Gastrocnemius medialis (tissue), 4 donors: ENCODE measurements at regions of chr2 and their contacts with region 1.

Region 1: GRCh38 chr2:239401067-239401880 is 454 bp upstream of the HDAC4 start:
- DNase-seq: peak; percentile 98 to 99
- ATAC-seq: peak; percentile 78 to 80
- H3K4me3 ChIP-seq: peak overlapping the region; percentile 61 to 96 (median 78)
- H3K27ac ChIP-seq: peak overlapping the region; percentile 93 to 100 (median 97)
- H3K4me1 ChIP-seq: peaks cover 13 to 39% of the 10 kb centered on the region in 2 donors
- H3K27me3 ChIP-seq: no peaks in the 10 kb centered on the region
- CTCF ChIP-seq: peak in 1 of 5 experiments; percentile 36
- POLR2A ChIP-seq: peak; percentile 98 to 99

Region 2: GRCh38 chr2:239223310-239224198 is 177.7 kb before region 1 on chr2:
- in situ Hi-C with region 1: no loop called
- intact Hi-C with region 1: loop called (anchors 1 kb)
- DNase-seq: no peak
- ATAC-seq: peak; percentile 10 to 15
- H3K4me3 ChIP-seq: no peak overlapping the region
- H3K27ac ChIP-seq: peak overlapping the region; percentile 86 to 99 (median 93)
- H3K4me1 ChIP-seq: peaks cover 89 to 90% of the 10 kb centered on the region in 2 donors
- H3K27me3 ChIP-seq: no peaks in the 10 kb centered on the region
- CTCF ChIP-seq: no peak
- POLR2A ChIP-seq: no peak

Region 3: GRCh38 chr2:239275044-239275685 is 126.1 kb before region 1 on chr2:
- in situ Hi-C with region 1: no loop called
- intact Hi-C with region 1: loop called (anchors 1 kb)
- DNase-seq: peak; percentile 92 to 96
- ATAC-seq: peak; percentile 68 to 75
- H3K4me3 ChIP-seq: peak overlapping the region; percentile 22 to 46 (median 40)
- H3K27ac ChIP-seq: peak overlapping the region; percentile 94 to 99 (median 98)
- H3K4me1 ChIP-seq: peaks cover 97 to 98% of the 10 kb centered on the region in 2 donors
- H3K27me3 ChIP-seq: no peaks in the 10 kb centered on the region
- CTCF ChIP-seq: peak in 3 of 5 experiments; percentile 8 to 58 (median 25)
- POLR2A ChIP-seq: peak; percentile 58 to 76

Region 4: DNA sequence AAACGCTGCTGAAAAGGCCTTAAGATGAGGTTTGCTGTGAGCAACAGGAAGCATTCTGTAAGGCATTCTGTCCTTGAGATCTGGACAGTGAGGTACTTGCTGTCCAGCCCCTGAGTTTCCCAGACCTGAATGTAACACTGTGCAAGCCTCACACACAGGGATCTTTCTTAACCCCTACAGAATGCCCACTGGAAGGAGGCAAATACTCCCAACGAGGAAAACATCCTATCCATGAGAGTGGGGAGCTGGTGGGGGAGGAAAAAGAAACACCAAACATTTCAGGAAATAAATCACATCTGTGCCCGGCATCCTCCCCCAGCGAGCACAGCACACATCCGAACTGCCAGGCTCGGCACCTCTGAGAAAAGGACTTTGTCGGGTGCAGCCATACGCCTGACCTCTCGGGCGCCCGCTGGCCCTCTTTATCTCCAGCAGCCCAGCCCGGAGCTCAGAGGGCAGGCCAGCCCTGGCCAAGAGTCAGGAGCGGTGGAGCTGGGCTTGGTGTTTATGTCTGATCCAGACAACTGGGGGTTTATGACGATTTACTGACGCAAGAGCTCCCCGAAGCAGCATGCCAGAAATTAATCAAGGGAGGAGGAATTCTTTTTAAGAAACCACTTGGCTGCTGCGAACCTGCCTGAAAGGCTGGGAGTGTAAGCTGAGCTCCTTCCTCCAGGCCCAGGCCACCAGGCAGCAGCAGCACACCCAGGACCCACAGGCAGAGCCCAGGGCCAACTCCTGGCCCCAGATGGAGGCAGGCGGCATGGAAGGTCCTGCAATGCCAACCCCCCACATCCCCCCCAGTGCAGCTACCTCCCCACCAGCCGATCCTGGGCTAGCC is 72.7 kb before region 1 on chr2:
- in situ Hi-C with region 1: no loop called
- intact Hi-C with region 1: loop called (anchors 1 kb)
- DNase-seq: peak; percentile 81 to 93
- ATAC-seq: peak; percentile 49 to 55
- H3K4me3 ChIP-seq: peak overlapping the region in 3 of 4 donors; percentile 11 to 36 (median 26)
- H3K27ac ChIP-seq: peak overlapping the region; percentile 96 to 99 (median 98)
- H3K4me1 ChIP-seq: peaks cover 45 to 58% of the 10 kb centered on the region in 2 donors
- H3K27me3 ChIP-seq: no peaks in the 10 kb centered on the region
- CTCF ChIP-seq: peak in 1 of 5 experiments; percentile 11
- POLR2A ChIP-seq: peak; percentile 91 to 94

Region 5: GRCh38 chr2:239463541-239464165 is 62.4 kb after region 1 on chr2:
- in situ Hi-C with region 1: no loop called
- intact Hi-C with region 1: loop called (anchors 5 kb)
- DNase-seq: peak; percentile 69 to 70
- ATAC-seq: peak; percentile 93 to 95
- H3K4me3 ChIP-seq: no peak overlapping the region
- H3K27ac ChIP-seq: peak overlapping the region in 3 of 4 donors; percentile 41 to 64 (median 50)
- H3K4me1 ChIP-seq: peaks cover 7 to 15% of the 10 kb centered on the region in 2 donors
- H3K27me3 ChIP-seq: no peaks in the 10 kb centered on the region
- CTCF ChIP-seq: no peak
- POLR2A ChIP-seq: no peak

Region 6: DNA sequence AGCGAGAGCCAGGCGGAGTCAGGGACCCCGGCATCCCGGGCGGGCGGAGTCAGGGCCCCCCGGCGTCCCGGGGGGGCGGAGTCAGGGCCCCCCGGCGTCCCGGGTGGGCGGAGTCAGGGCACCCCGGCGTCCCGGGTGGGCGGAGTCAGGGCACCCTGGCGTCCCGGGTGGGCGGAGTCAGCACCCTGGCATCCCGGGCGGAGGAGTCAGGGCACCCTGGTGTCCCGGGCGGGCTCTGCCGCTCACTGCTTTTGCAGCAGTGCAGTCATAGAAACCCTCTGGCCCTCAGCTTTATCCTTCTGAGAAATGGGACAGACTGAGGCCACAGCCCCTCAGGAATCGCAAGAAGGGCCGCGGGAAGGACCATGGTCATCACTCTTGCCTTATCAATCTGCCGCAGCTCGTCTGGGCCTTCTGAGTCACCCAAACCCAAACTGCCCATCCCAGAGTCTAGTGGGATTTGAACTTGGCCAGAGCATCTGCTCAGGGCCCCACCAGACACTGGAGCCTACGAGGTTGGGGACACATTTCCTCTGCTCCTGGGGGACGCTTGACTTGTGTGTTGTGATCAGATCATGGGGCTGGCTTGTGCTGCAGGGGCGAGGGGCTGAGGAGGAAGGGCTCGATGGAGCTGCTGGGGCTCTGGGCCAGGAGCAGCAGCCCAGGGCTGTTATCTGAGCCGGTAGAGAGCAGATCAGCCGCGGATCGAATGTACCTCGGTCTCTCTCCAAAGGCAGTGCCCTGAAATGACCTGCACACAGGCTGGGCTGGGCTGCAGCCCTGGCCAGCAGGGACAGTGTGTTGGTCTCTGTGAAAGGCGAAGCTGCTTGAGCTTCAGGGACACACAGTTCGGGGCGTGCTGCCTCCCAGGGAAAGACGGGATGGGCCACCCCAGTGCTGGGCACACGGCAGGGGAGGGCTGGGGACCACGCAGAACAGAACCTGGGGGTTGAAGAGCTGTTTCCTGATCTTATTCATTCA is 289.7 kb after region 1 on chr2:
- in situ Hi-C with region 1: no loop called
- intact Hi-C with region 1: loop called (anchors 5 kb)
- DNase-seq: peak; percentile 68
- ATAC-seq: peak; percentile 72 to 73
- H3K4me3 ChIP-seq: peak overlapping the region in 2 of 4 donors; percentile 0 to 25
- H3K27ac ChIP-seq: peak overlapping the region; percentile 75 to 83 (median 81)
- H3K4me1 ChIP-seq: peaks cover 33 to 41% of the 10 kb centered on the region in 2 donors
- H3K27me3 ChIP-seq: no peaks in the 10 kb centered on the region
- CTCF ChIP-seq: peak in 2 of 5 experiments; percentile 21 to 22
- POLR2A ChIP-seq: peak in 1 of 2 donors; percentile 63

Region 7: GRCh38 chr2:240032406-240033329 is 631.4 kb after region 1 on chr2:
- in situ Hi-C with region 1: no loop called
- intact Hi-C with region 1: no loop called
- DNase-seq: no peak
- ATAC-seq: no peak
- H3K4me3 ChIP-seq: no peak overlapping the region
- H3K27ac ChIP-seq: no peak overlapping the region
- H3K4me1 ChIP-seq: no peaks in the 10 kb centered on the region
- H3K27me3 ChIP-seq: peaks cover 0 to 3% (median 0%) of the 10 kb centered on the region in 3 donors
- CTCF ChIP-seq: no peak
- POLR2A ChIP-seq: no peak